Transverse colon (tissue), 4 donors: ENCODE measurements at regions of chr7 and their contacts with region 1.

Region 1: DNA sequence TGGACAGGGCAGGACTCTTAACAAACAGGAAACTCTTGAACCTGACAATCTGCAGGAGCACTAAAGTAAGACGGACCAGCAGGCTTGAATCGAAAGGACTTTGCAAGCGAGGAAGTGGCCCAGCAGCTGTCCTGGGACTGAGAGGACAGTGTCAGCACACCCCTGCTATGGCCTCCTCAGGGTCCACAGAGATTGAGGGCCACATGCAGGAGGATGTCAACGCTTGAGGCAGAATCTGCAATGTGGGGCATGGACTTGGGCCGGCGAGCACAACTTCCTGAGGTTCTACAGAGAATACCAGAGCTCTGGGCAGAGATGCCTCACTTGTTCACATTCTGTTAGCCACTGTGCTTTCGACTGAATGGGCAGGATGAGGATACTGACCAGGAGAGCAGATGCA is 84.4 kb upstream of the EFCAB10 start:
- DNase-seq: no peak
- H3K4me3 ChIP-seq: no peak overlapping the region
- H3K27ac ChIP-seq: no peak overlapping the region
- H3K4me1 ChIP-seq: peaks cover 0 to 3% (median 0%) of the 10 kb centered on the region in 4 donors
- H3K27me3 ChIP-seq: no peaks in the 10 kb centered on the region
- CTCF ChIP-seq: no peak
- EP300 ChIP-seq: no peak
- POLR2A ChIP-seq: no peak

Region 2: GRCh38 chr7:105625986-105626385 is 39.7 kb before region 1 on chr7:
- in situ Hi-C with region 1: no loop called
- intact Hi-C with region 1: loop called (anchors 2 kb)
- DNase-seq: no peak
- H3K4me3 ChIP-seq: no peak overlapping the region
- H3K27ac ChIP-seq: no peak overlapping the region
- H3K4me1 ChIP-seq: no peaks in the 10 kb centered on the region
- H3K27me3 ChIP-seq: no peaks in the 10 kb centered on the region
- CTCF ChIP-seq: no peak
- EP300 ChIP-seq: no peak
- POLR2A ChIP-seq: no peak

Region 3: DNA sequence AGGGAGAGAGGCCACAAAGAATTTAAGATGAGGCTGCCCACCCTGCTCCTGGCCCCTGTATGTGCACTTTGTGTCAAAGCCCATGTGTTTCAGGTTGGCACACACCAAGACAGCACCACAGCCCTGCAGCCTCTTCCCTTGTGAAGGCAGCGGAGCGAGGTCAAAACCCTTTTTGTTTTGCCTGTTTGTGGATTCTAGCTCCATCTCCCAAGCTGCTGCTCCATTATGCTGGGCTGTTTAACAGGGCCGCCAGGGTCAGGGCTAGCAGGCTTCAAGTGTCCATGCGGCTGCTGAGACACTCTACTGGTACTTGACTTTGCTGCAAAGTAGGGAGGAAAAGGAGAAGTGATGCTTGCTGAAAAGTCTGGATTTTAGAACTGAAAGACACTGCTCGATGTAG is 57.9 kb after region 1 on chr7:
- in situ Hi-C with region 1: no loop called
- intact Hi-C with region 1: no loop called
- DNase-seq: no peak
- H3K4me3 ChIP-seq: no peak overlapping the region
- H3K27ac ChIP-seq: no peak overlapping the region
- H3K4me1 ChIP-seq: peaks cover 0 to 3% (median 0%) of the 10 kb centered on the region in 4 donors
- H3K27me3 ChIP-seq: no peaks in the 10 kb centered on the region
- CTCF ChIP-seq: no peak
- EP300 ChIP-seq: no peak
- POLR2A ChIP-seq: no peak

Region 4: GRCh38 chr7:105857009-105857952 is 191.6 kb after region 1 on chr7:
- in situ Hi-C with region 1: no loop called
- intact Hi-C with region 1: no loop called
- DNase-seq: no peak
- H3K4me3 ChIP-seq: no peak overlapping the region
- H3K27ac ChIP-seq: no peak overlapping the region
- H3K4me1 ChIP-seq: peaks cover 0 to 4% (median 2%) of the 10 kb centered on the region in 4 donors
- H3K27me3 ChIP-seq: no peaks in the 10 kb centered on the region
- CTCF ChIP-seq: no peak
- EP300 ChIP-seq: no peak
- POLR2A ChIP-seq: no peak